ENCODE measurements at regions of chr9 and their contacts with region 1.

Region 1: GRCh38 chr9:99130069-99130468 is 25.2 kb downstream of the TGFBR1 start:
- DNase-seq: peak in 1 of 14 experiments; percentile 30
- ATAC-seq: no peak
- H3K4me3 ChIP-seq: no peak overlapping the region
- H3K4me3 Mint-ChIP-seq: peak overlapping the region; percentile 4
- H3K27ac ChIP-seq: peak overlapping the region in 1 of 2 donors; percentile 8
- H3K27ac Mint-ChIP-seq: peak overlapping the region; percentile 79
- H3K4me1 ChIP-seq: peaks cover 36% of the 10 kb centered on the region
- H3K4me1 Mint-ChIP-seq: peaks cover 92% of the 10 kb centered on the region
- H3K27me3 ChIP-seq: no peaks in the 10 kb centered on the region
- H3K27me3 Mint-ChIP-seq: no peaks in the 10 kb centered on the region
- CTCF ChIP-seq: no peak

Region 2: GRCh38 chr9:98726735-98727134 is 403.3 kb before region 1 on chr9:
- CTCF ChIA-PET with region 1: no interaction called
- POLR2A ChIA-PET with region 1: no interaction called
- intact Hi-C with region 1: no loop called
- DNase-seq: peak in 3 of 14 experiments; percentile 23 to 45 (median 40)
- ATAC-seq: no peak
- H3K4me3 ChIP-seq: no peak overlapping the region
- H3K4me3 Mint-ChIP-seq: no peak overlapping the region
- H3K27ac ChIP-seq: no peak overlapping the region
- H3K27ac Mint-ChIP-seq: no peak overlapping the region
- H3K4me1 ChIP-seq: no peaks in the 10 kb centered on the region
- H3K4me1 Mint-ChIP-seq: no peaks in the 10 kb centered on the region
- H3K27me3 ChIP-seq: peaks cover 7 to 17% of the 10 kb centered on the region in 2 experiments
- H3K27me3 Mint-ChIP-seq: peaks cover 35% of the 10 kb centered on the region
- CTCF ChIP-seq: no peak

Region 3: GRCh38 chr9:99050292-99050911 is 79.7 kb before region 1 on chr9:
- CTCF ChIA-PET with region 1: no interaction called
- POLR2A ChIA-PET with region 1: interaction called, 4 read pairs
- intact Hi-C with region 1: loop called in 1 of 2 experiments (anchors 5 kb)
- DNase-seq: no peak
- ATAC-seq: no peak
- H3K4me3 ChIP-seq: no peak overlapping the region
- H3K4me3 Mint-ChIP-seq: no peak overlapping the region
- H3K27ac ChIP-seq: no peak overlapping the region
- H3K27ac Mint-ChIP-seq: no peak overlapping the region
- H3K4me1 ChIP-seq: peaks cover 37% of the 10 kb centered on the region
- H3K4me1 Mint-ChIP-seq: peaks cover 35% of the 10 kb centered on the region
- H3K27me3 ChIP-seq: no peaks in the 10 kb centered on the region
- H3K27me3 Mint-ChIP-seq: no peaks in the 10 kb centered on the region
- CTCF ChIP-seq: no peak

Region 4: GRCh38 chr9:99112750-99113413 is 17.2 kb before region 1 on chr9:
- CTCF ChIA-PET with region 1: interaction called, 4 read pairs
- POLR2A ChIA-PET with region 1: interaction called, 73 read pairs
- intact Hi-C with region 1: loop called (anchors 1 to 2 kb)
- DNase-seq: peak in 13 of 14 experiments; percentile 18 to 88 (median 39)
- ATAC-seq: peak; percentile 95
- H3K4me3 ChIP-seq: peak overlapping the region; percentile 1
- H3K4me3 Mint-ChIP-seq: peak overlapping the region; percentile 71
- H3K27ac ChIP-seq: no peak overlapping the region
- H3K27ac Mint-ChIP-seq: peak overlapping the region; percentile 71
- H3K4me1 ChIP-seq: peaks cover 50% of the 10 kb centered on the region
- H3K4me1 Mint-ChIP-seq: peaks cover 84% of the 10 kb centered on the region
- H3K27me3 ChIP-seq: no peaks in the 10 kb centered on the region
- H3K27me3 Mint-ChIP-seq: no peaks in the 10 kb centered on the region
- CTCF ChIP-seq: no peak

Region 5: DNA sequence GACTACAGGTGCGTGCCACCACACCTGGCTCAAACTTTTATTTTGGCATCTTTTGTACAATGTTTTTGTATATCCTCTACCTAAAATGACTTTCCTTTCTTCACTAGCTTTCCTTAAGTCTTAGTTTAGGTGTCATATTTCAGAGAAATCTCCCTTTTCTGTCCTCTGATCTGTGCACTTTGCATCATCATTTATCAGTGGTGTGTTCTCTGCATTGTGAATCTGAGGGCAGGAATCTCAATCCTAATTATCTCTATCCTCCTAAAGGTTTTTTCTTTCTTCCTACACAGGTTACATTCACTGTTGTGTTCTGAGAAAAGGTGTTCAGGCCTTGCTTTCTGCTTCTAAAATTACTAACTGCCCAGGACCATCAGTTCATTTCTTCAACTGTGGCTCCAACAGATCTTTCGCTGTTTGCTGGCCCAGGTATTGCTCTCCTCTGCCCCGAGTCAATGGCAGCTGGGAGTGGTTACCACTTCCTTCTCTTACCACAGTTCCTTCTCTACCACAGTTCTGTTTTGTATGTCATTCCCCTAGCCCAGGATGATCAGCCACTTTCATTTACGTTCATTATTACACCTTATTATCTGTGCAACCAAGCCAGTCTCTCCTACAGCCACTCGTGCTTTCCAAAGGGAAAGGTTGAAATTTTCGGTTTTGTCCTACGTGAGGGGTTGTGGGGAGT is 11.1 kb before region 1 on chr9:
- CTCF ChIA-PET with region 1: interaction called, 4 read pairs
- POLR2A ChIA-PET with region 1: interaction called, 53 read pairs
- intact Hi-C with region 1: loop called in 1 of 2 experiments (anchors 2 kb)
- DNase-seq: peak; percentile 21 to 88 (median 46)
- ATAC-seq: peak; percentile 99
- H3K4me3 ChIP-seq: peak overlapping the region; percentile 28
- H3K4me3 Mint-ChIP-seq: peak overlapping the region; percentile 42
- H3K27ac ChIP-seq: peak overlapping the region in 1 of 2 donors; percentile 22
- H3K27ac Mint-ChIP-seq: peak overlapping the region; percentile 70
- H3K4me1 ChIP-seq: peaks cover 32% of the 10 kb centered on the region
- H3K4me1 Mint-ChIP-seq: peaks cover 81% of the 10 kb centered on the region
- H3K27me3 ChIP-seq: no peaks in the 10 kb centered on the region
- H3K27me3 Mint-ChIP-seq: no peaks in the 10 kb centered on the region
- CTCF ChIP-seq: no peak

Region 6: DNA sequence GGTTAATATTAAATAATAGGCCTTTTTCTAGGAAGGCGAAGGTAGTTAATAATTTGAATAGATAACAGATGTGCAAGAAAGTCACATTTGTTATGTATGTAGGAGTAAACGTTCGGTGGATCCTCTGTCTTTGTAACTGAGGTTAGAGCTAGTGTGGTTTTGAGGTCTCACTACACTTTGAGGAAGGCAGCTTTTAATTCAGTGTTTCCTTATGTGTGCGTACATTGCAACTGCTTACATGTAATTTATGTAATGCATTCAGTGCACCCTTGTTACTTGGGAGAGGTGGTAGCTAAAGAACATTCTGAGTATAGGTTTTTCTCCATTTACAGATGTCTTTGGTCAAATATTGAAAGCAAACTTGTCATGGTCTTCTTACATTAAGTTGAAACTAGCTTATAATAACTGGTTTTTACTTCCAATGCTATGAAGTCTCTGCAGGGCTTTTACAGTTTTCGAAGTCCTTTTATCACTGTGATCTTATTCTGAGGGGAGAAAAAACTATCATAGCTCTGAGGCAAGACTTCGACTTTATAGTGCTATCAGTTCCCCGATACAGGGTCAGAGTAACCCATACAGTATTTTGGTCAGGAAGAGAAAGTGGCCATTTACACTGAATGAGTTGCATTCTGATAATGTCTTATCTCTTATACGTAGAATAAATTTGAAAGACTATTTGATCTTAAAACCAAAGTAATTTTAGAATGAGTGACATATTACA is 20.5 kb after region 1 on chr9:
- CTCF ChIA-PET with region 1: no interaction called
- POLR2A ChIA-PET with region 1: no interaction called
- intact Hi-C with region 1: loop called in 1 of 2 experiments (anchors 2 kb)
- DNase-seq: peak in 3 of 14 experiments; percentile 42 to 55 (median 52)
- ATAC-seq: peak; percentile 95
- H3K4me3 ChIP-seq: no peak overlapping the region
- H3K4me3 Mint-ChIP-seq: peak overlapping the region; percentile 72
- H3K27ac ChIP-seq: no peak overlapping the region
- H3K27ac Mint-ChIP-seq: peak overlapping the region; percentile 86
- H3K4me1 ChIP-seq: no peaks in the 10 kb centered on the region
- H3K4me1 Mint-ChIP-seq: peaks cover 50% of the 10 kb centered on the region
- H3K27me3 ChIP-seq: no peaks in the 10 kb centered on the region
- H3K27me3 Mint-ChIP-seq: no peaks in the 10 kb centered on the region
- CTCF ChIP-seq: no peak

Region 7: DNA sequence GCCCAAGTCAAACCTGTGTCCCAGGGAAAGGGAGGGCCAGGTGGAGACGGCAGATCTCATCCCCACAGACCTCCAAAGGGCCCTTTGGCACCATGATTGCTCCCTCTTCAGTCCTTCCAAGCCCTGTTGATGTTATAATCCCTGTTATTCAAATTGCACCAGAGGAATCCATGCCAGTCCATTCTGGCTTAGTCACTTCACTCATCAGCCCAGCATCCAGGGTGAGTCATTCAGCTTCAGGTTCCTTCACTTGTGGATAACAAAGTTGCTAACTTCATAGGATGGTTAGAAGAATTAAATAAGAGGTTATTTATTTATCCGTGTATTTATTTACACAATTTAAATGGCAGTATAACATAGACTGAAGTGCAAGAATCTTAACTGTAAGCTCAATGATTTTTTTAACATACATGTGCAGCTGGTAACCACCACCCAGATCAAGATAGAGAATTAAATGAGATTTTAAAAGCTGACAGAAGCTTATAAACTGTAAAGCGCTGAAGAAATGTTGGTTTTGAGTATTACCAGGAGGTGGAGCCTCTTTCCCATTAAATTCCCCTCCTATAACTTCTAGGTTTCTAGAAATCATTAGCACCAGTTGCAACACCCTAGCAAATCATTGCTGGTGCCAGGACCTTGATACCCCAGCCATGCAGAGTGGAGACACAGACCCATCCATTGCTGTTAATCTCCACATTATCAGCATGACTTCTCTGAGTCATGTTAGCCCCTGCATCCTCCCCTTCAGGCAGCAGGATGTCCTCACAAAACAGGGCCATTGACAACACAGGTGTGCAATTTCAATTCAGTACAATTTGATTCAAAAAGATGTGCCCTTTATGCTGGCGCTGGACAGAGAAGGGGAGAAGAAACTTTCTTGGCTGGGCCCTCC is 169.4 kb after region 1 on chr9:
- CTCF ChIA-PET with region 1: no interaction called
- POLR2A ChIA-PET with region 1: no interaction called
- intact Hi-C with region 1: no loop called
- DNase-seq: no peak
- ATAC-seq: no peak
- H3K4me3 ChIP-seq: no peak overlapping the region
- H3K4me3 Mint-ChIP-seq: no peak overlapping the region
- H3K27ac ChIP-seq: no peak overlapping the region
- H3K27ac Mint-ChIP-seq: no peak overlapping the region
- H3K4me1 ChIP-seq: peaks cover 3% of the 10 kb centered on the region
- H3K4me1 Mint-ChIP-seq: peaks cover 6% of the 10 kb centered on the region
- H3K27me3 ChIP-seq: peaks cover 0 to 9% of the 10 kb centered on the region in 2 experiments
- H3K27me3 Mint-ChIP-seq: no peaks in the 10 kb centered on the region
- CTCF ChIP-seq: no peak

Region 8: GRCh38 chr9:99851500-99851822 is 721.4 kb after region 1 on chr9:
- CTCF ChIA-PET with region 1: no interaction called
- POLR2A ChIA-PET with region 1: no interaction called
- intact Hi-C with region 1: no loop called
- DNase-seq: peak in 6 of 14 experiments; percentile 4 to 79 (median 43)
- ATAC-seq: peak; percentile 64
- H3K4me3 ChIP-seq: no peak overlapping the region
- H3K4me3 Mint-ChIP-seq: no peak overlapping the region
- H3K27ac ChIP-seq: no peak overlapping the region
- H3K27ac Mint-ChIP-seq: no peak overlapping the region
- H3K4me1 ChIP-seq: peaks cover 17% of the 10 kb centered on the region
- H3K4me1 Mint-ChIP-seq: peaks cover 34% of the 10 kb centered on the region
- H3K27me3 ChIP-seq: no peaks in the 10 kb centered on the region
- H3K27me3 Mint-ChIP-seq: no peaks in the 10 kb centered on the region
- CTCF ChIP-seq: no peak

Measured in CD4-positive, alpha-beta T cell (primary cell).